ENCODE measurements at regions of chr12 and their contacts with region 1.

Region 1: GRCh38 chr12:107131832-107132616 is 38.7 kb upstream of the CRY1 start:
- DNase-seq: no peak

Region 2: GRCh38 chr12:107402041-107403022 is 270.3 kb after region 1 on chr12:
- intact Hi-C with region 1: loop called (anchors 10 kb)
- DNase-seq: no peak

Region 3: DNA sequence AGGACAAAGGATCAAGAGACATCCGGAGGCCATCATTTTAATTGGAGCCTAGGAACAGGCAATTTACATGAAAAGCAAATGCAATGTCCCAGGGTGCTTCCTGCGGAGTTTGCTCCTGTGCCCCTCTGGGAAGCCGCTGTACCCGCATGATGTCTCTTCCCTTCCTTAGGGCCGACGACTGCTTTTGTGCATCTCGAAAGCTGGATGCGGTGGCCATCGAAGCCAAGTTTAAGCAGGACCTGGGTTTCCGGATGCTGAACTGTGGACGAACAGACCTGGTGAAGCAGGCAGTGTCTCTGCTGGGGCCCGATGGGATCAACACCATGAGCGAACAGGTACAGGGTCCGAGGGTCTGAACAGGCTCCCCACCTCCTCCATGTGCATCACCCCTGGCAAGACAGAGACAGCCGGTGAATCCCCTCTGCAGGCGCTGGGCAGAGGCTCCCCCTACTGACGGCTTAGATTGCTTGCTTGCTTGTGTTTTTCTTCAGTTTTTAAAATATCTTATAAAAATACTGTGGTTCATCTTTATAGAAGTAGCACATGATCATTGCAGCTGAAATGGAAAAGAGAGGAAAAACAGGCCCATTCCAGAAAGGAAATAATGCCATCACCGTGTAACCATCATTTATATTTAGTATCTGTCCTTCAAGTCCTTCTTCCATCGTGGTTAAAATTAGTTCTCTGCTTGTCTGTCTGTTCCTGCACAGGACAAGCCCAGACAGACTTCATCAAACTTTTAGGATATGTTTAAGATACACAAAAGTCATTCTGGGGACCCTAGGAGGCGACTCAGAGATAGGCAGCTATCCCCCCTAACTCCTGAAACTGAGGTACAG is 478.2 kb after region 1 on chr12:
- intact Hi-C with region 1: loop called (anchors 1 kb)
- DNase-seq: no peak

Region 4: GRCh38 chr12:107632246-107632645 is 500.2 kb after region 1 on chr12:
- intact Hi-C with region 1: no loop called
- DNase-seq: no peak

Measured in cardiac septum (tissue), 1 donor.